PC-3 (cell line): ENCODE measurements at regions of chr12 and their contacts with region 1.

Region 1: GRCh38 chr12:66503746-66504145 is 175.1 kb downstream of the GRIP1 start:
- DNase-seq: no peak
- ATAC-seq: no peak
- H3K4me3 ChIP-seq: no peak overlapping the region
- H3K27ac ChIP-seq: no peak overlapping the region
- H3K4me1 ChIP-seq: peaks cover 7% of the 10 kb centered on the region
- H3K27me3 ChIP-seq: no peaks in the 10 kb centered on the region
- CTCF ChIP-seq: no peak

Region 2: DNA sequence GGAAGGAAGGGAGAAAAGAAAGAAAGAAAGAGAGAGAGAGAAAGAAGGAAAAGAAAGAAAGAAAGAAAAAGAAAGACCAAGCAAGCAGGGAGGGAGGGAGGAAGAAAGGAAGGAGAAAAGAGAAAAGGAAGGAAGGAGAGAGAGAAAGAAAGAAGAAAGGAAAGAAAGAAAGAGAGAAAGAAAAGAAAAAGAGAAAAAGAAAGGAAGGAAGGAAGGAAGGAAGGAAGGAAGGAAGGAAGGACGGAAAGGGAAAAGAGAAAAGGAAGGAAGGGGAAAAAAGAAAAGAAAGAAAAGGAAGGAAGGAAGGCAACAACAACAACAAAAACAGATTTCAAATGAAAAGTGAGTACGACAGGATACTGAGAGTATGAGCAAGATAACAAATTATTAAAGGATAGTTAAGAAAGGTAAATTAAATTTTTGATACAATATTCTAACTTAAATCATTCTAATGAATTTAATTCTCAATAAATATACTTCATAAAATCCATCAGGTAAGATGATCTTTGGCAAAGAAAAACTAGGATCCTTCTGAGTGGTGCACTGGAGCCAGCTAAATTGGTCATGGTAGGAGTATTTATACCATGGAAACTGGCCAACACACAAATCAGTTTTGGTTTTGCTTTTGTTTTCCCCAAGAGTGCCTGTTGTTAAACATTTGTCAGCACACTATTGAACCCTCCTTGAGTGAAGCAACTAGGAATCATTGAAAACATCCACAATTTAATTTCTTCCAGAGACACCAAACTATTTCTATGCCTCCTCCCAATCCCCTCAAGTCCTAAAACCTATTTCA is 1088.7 kb after region 1 on chr12:
- CTCF ChIA-PET with region 1: no interaction called
- POLR2A ChIA-PET with region 1: interaction called, 11 read pairs
- intact Hi-C with region 1: no loop called
- DNase-seq: peak; percentile 66
- ATAC-seq: peak; percentile 56
- H3K4me3 ChIP-seq: peak overlapping the region; percentile 47
- H3K27ac ChIP-seq: peak overlapping the region; percentile 81
- H3K4me1 ChIP-seq: peaks cover 37% of the 10 kb centered on the region
- H3K27me3 ChIP-seq: no peaks in the 10 kb centered on the region
- CTCF ChIP-seq: no peak